PC-3 (cell line): ENCODE measurements at regions of chr1 and their contacts with region 1.

Region 1: GRCh38 chr1:44799770-44800584 is at the start of gene PLK3:
- DNase-seq: peak; percentile 96
- ATAC-seq: peak; percentile 85
- H3K4me3 ChIP-seq: peak within 1 kb of the TSS; percentile 98
- H3K27ac ChIP-seq: peak within 1 kb of the TSS; percentile 77
- H3K4me1 ChIP-seq: peaks cover 16% of the 10 kb centered on the region
- H3K27me3 ChIP-seq: no peaks in the 10 kb centered on the region
- CTCF ChIP-seq: peak; percentile 83
- total RNA-seq, gene PLK3: 38.9 and 44.0 TPM in 2 replicates

Region 2: DNA sequence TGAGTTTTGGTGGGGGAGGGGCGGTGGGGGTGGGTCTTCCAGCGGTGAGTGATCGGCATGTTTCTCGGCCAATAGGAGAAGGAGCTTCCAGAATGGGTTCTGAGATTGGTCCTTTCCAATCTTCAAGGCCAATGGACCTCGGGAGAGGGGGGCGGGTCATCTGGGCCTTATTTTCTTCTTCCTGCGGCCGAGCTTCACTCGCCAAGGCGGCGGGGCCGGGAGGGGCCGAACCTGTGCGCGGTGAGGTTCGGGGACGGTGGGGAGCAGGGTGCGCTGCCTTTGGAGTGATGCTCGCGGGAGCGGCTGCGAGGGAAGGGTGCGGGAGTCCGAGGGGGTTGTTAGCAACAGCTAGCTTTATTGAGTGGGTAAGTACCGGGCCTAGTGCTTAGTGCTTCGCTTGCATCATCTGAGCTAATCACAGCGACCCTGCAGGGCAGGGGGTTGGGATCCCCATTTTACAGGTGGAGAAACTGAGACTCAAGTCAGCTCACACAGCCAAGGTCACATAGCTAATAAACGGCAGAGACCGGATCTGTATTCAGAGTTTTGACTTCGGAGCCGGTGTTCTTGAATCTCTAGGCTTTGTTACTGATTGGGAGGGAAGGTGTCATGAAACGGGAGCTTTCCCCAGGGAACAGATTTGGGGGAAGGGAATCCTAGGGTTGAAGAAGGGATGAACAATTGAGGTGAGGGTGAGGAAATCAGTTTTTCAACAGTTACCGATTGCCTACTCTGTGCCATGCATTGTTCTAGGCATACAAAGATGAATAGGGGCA is 1149.5 kb before region 1 on chr1:
- CTCF ChIA-PET with region 1: no interaction called
- POLR2A ChIA-PET with region 1: interaction called, 17 read pairs
- intact Hi-C with region 1: no loop called
- DNase-seq: peak; percentile 98
- ATAC-seq: peak; percentile 76
- H3K4me3 ChIP-seq: peak overlapping the region; percentile 93
- H3K27ac ChIP-seq: peak overlapping the region; percentile 62
- H3K4me1 ChIP-seq: peaks cover 13% of the 10 kb centered on the region
- H3K27me3 ChIP-seq: no peaks in the 10 kb centered on the region
- CTCF ChIP-seq: no peak

Region 3: GRCh38 chr1:44084998-44085675 is 714.8 kb before region 1 on chr1:
- CTCF ChIA-PET with region 1: no interaction called
- POLR2A ChIA-PET with region 1: no interaction called
- intact Hi-C with region 1: no loop called
- DNase-seq: peak; percentile 84
- ATAC-seq: peak; percentile 69
- H3K4me3 ChIP-seq: no peak overlapping the region
- H3K27ac ChIP-seq: no peak overlapping the region
- H3K4me1 ChIP-seq: peaks cover 14% of the 10 kb centered on the region
- H3K27me3 ChIP-seq: no peaks in the 10 kb centered on the region
- CTCF ChIP-seq: no peak

Region 4: DNA sequence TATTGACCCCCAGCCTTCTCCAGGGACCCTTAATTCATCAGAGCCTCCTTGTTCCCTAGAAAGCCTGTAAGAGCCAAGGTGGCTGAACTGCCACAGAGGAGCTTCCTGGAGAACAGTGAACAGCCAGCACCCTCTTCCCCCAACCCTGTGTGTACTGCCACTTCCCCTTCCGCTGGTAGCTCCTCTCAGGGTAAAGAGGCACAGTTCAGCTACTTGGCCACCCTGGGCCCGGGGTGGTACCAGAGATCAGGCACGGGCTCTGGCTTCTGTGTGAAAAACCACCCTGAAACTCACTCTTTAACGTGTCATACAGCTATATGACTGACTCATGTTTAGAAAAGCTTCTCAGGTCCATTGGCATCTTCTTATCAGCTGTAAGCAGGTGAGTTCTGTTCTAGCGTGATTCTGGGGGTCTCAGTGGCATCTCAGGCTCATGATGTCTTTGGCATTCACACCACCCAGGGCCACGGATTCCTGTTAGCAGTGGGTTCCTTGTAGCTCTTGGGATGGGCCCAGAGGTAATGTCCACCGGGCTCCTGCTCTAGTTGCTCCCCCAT is 103.1 kb before region 1 on chr1:
- CTCF ChIA-PET with region 1: no interaction called
- POLR2A ChIA-PET with region 1: no interaction called
- intact Hi-C with region 1: no loop called
- DNase-seq: no peak
- ATAC-seq: no peak
- H3K4me3 ChIP-seq: no peak overlapping the region
- H3K27ac ChIP-seq: no peak overlapping the region
- H3K4me1 ChIP-seq: peaks cover 16% of the 10 kb centered on the region
- H3K27me3 ChIP-seq: no peaks in the 10 kb centered on the region
- CTCF ChIP-seq: no peak

Region 5: GRCh38 chr1:44819608-44820327 is 19.8 kb after region 1 on chr1:
- CTCF ChIA-PET with region 1: interaction called, 5 read pairs
- POLR2A ChIA-PET with region 1: interaction called, 15 read pairs
- intact Hi-C with region 1: no loop called
- DNase-seq: peak; percentile 84
- ATAC-seq: peak; percentile 87
- H3K4me3 ChIP-seq: peak overlapping the region; percentile 61
- H3K27ac ChIP-seq: peak overlapping the region; percentile 76
- H3K4me1 ChIP-seq: peaks cover 7% of the 10 kb centered on the region; the same call in 1 of the 2 replicates
- H3K27me3 ChIP-seq: no peaks in the 10 kb centered on the region
- CTCF ChIP-seq: no peak

Region 6: GRCh38 chr1:45423906-45424678 is 624.1 kb after region 1 on chr1:
- CTCF ChIA-PET with region 1: interaction called, 13 read pairs
- POLR2A ChIA-PET with region 1: no interaction called
- intact Hi-C with region 1: no loop called
- DNase-seq: no peak
- ATAC-seq: no peak
- H3K4me3 ChIP-seq: no peak overlapping the region
- H3K27ac ChIP-seq: no peak overlapping the region
- H3K4me1 ChIP-seq: no peaks in the 10 kb centered on the region
- H3K27me3 ChIP-seq: no peaks in the 10 kb centered on the region
- CTCF ChIP-seq: no peak